Adrenal gland (tissue), 19 donors: ENCODE measurements at regions of chr11 and their contacts with region 1.

Region 1: GRCh38 chr11:70467201-70468085 is 69.1 kb downstream of the CTTN start:
- DNase-seq: peak; percentile 53 to 85 (median 73)
- H3K4me3 ChIP-seq: no peak overlapping the region
- H3K27ac ChIP-seq: no peak overlapping the region
- H3K4me1 ChIP-seq: no peaks in the 10 kb centered on the region
- H3K27me3 ChIP-seq: no peaks in the 10 kb centered on the region
- CTCF ChIP-seq: peak; percentile 87 to 95 (median 92)
- POLR2A ChIP-seq: no peak

Region 2: GRCh38 chr11:69985641-69986439 is 481.6 kb before region 1 on chr11:
- intact Hi-C with region 1: no loop called
- DNase-seq: no peak
- H3K4me3 ChIP-seq: peak overlapping the region in 1 of 4 donors; percentile 45
- H3K27ac ChIP-seq: peak overlapping the region in 1 of 5 donors; percentile 32
- H3K4me1 ChIP-seq: peaks cover 0 to 3% of the 10 kb centered on the region in 2 donors
- H3K27me3 ChIP-seq: peaks cover 25% of the 10 kb centered on the region
- CTCF ChIP-seq: no peak
- POLR2A ChIP-seq: no peak

Region 3: GRCh38 chr11:70381872-70382861 is 85.3 kb before region 1 on chr11:
- intact Hi-C with region 1: no loop called
- DNase-seq: peak in 1 of 7 donors; percentile 42
- H3K4me3 ChIP-seq: no peak overlapping the region
- H3K27ac ChIP-seq: peak overlapping the region in 2 of 5 donors; percentile 40 to 65
- H3K4me1 ChIP-seq: peaks cover 12 to 16% of the 10 kb centered on the region in 2 donors
- H3K27me3 ChIP-seq: no peaks in the 10 kb centered on the region
- CTCF ChIP-seq: peak in 1 of 6 experiments; percentile 15
- POLR2A ChIP-seq: no peak

Region 4: GRCh38 chr11:70628855-70629844 is 161.7 kb after region 1 on chr11:
- intact Hi-C with region 1: no loop called
- DNase-seq: peak in 4 of 7 donors; percentile 11 to 62 (median 34)
- H3K4me3 ChIP-seq: no peak overlapping the region
- H3K27ac ChIP-seq: peak overlapping the region in 1 of 5 donors; percentile 10
- H3K4me1 ChIP-seq: no peaks in the 10 kb centered on the region
- H3K27me3 ChIP-seq: no peaks in the 10 kb centered on the region
- CTCF ChIP-seq: no peak
- POLR2A ChIP-seq: no peak

Region 5: GRCh38 chr11:70755410-70756161 is 288.1 kb after region 1 on chr11:
- intact Hi-C with region 1: loop called (anchors 2 kb)
- DNase-seq: peak; percentile 78 to 92 (median 82)
- H3K4me3 ChIP-seq: no peak overlapping the region
- H3K27ac ChIP-seq: no peak overlapping the region
- H3K4me1 ChIP-seq: no peaks in the 10 kb centered on the region
- H3K27me3 ChIP-seq: no peaks in the 10 kb centered on the region
- CTCF ChIP-seq: peak; percentile 98 to 100 (median 99)
- POLR2A ChIP-seq: no peak